ENCODE measurements at regions of chr9 and their contacts with region 1.

Region 1: GRCh38 chr9:104991144-104991953 is 63.4 kb upstream of the ABCA1 start:
- DNase-seq: peak; percentile 94 to 95
- H3K4me3 ChIP-seq: peak overlapping the region; percentile 54 to 71 (median 56)
- H3K27ac ChIP-seq: peak overlapping the region; percentile 92 to 97 (median 93)
- H3K4me1 ChIP-seq: peaks cover 35 to 48% (median 42%) of the 10 kb centered on the region in 4 donors
- H3K27me3 ChIP-seq: no peaks in the 10 kb centered on the region
- CTCF ChIP-seq: no peak
- EP300 ChIP-seq: peak; percentile 24
- POLR2A ChIP-seq: no peak

Region 2: DNA sequence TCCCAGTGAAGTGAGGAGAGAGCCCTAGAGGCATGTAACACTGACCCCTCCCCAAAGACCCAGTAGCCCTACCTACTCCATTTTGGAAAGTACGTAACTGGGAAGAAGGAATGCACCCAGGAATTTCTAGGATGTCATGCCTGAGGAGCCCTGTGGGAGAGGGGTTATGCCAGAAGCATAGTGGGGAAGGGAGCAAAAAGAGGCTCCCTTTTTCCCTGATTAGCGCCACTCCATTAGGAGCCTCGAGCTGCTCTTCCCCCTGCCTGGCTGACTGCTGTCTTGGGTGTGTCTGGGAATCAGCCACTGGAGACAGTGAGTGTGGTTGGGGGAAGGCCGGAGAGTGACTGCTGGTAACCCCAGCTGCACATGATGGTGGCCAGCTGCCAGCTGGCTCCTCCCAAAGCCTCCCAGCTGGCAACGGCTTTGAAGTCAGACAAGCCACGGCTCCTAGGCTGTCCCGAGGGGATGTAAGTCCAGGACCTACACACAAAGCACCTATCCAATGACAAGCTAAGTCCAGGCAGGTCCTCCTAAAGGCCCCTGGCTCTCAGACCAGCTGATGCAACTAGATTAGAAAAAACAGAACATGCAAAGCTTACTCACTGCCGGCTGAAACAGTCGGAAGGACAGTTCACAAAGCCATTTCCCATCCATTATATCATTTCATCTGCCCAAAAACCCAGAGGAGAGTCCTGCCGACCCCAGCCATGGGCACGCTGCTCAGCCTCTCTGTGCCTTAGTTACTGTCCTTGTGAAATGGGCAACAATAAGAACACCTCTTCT is 73.2 kb after region 1 on chr9:
- intact Hi-C with region 1: loop called (anchors 10 kb)
- DNase-seq: peak; percentile 91 to 93
- H3K4me3 ChIP-seq: peak overlapping the region in 1 of 4 donors; percentile 7
- H3K27ac ChIP-seq: peak overlapping the region; percentile 67 to 89 (median 85)
- H3K4me1 ChIP-seq: peaks cover 29 to 49% (median 31%) of the 10 kb centered on the region in 4 donors
- H3K27me3 ChIP-seq: no peaks in the 10 kb centered on the region
- CTCF ChIP-seq: no peak
- EP300 ChIP-seq: peak; percentile 10
- POLR2A ChIP-seq: no peak

Measured in stomach (tissue), 19 donors.